Panc1 (cell line): ENCODE measurements at regions of chr12 and their contacts with region 1.

Region 1: GRCh38 chr12:89461649-89462612 is 62.7 kb downstream of the GALNT4 start:
- DNase-seq: peak; percentile 20
- ATAC-seq: peak; percentile 91
- H3K4me3 ChIP-seq: no peak overlapping the region
- H3K27ac ChIP-seq: no peak overlapping the region
- H3K4me1 ChIP-seq: no peaks in the 10 kb centered on the region
- H3K27me3 ChIP-seq: no peaks in the 10 kb centered on the region
- CTCF ChIP-seq: peak; percentile 57; the same call in 1 of the 2 replicates

Region 2: GRCh38 chr12:88970742-88971141 is 491.2 kb before region 1 on chr12:
- CTCF ChIA-PET with region 1: interaction called, 11 read pairs
- POLR2A ChIA-PET with region 1: no interaction called
- in situ Hi-C with region 1: no loop called
- intact Hi-C with region 1: no loop called
- DNase-seq: no peak
- ATAC-seq: no peak
- H3K4me3 ChIP-seq: no peak overlapping the region
- H3K27ac ChIP-seq: no peak overlapping the region
- H3K4me1 ChIP-seq: no peaks in the 10 kb centered on the region
- H3K27me3 ChIP-seq: no peaks in the 10 kb centered on the region
- CTCF ChIP-seq: no peak

Region 3: DNA sequence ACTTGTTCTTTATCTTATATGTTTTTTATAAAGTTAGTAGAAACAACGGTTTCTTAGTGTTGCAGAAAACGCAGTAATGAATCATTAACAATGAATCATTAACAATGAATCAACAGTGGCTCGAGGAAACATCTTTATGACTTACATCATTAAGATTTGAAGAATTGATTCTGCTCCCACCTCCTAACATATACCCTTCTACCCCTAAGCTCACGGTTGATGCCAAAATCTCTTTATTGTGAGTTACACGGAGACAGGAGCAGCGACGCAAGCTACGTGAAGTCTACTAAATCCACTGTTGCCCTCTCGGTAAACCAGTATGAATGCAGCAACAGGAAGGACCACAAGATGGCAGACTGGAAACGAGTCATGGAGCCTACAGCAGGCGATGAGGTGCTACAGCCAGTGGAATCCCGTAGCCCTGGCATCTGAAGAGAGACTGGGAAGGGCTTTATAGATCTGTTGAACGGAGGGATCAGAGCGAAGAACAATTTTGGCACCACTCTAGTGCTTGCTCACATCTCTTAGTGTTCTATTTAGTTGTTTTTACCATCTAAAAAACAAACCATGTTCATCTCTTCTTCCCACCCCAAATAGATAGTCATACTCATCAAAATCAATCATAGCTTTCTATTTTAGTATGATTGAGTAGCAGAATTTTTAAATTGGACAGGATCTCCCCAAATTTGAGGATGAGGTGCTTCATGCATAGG is 442.4 kb before region 1 on chr12:
- CTCF ChIA-PET with region 1: interaction called, 3 read pairs
- POLR2A ChIA-PET with region 1: interaction called, 4 read pairs
- in situ Hi-C with region 1: no loop called
- intact Hi-C with region 1: loop called (anchors 1 kb)
- DNase-seq: peak; percentile 85
- ATAC-seq: peak; percentile 99
- H3K4me3 ChIP-seq: peak overlapping the region; percentile 23 to 45
- H3K27ac ChIP-seq: no peak overlapping the region
- H3K4me1 ChIP-seq: peaks cover 2% of the 10 kb centered on the region; the same call in 1 of the 2 replicates
- H3K27me3 ChIP-seq: peaks cover 5% of the 10 kb centered on the region
- CTCF ChIP-seq: peak; percentile 90

Region 4: GRCh38 chr12:89051065-89051677 is 410.8 kb before region 1 on chr12:
- CTCF ChIA-PET with region 1: no interaction called
- POLR2A ChIA-PET with region 1: no interaction called
- in situ Hi-C with region 1: no loop called
- intact Hi-C with region 1: loop called (anchors 1 kb)
- DNase-seq: peak; percentile 51
- ATAC-seq: peak; percentile 83
- H3K4me3 ChIP-seq: no peak overlapping the region
- H3K27ac ChIP-seq: no peak overlapping the region
- H3K4me1 ChIP-seq: no peaks in the 10 kb centered on the region
- H3K27me3 ChIP-seq: no peaks in the 10 kb centered on the region; the same call in 1 of the 2 replicates
- CTCF ChIP-seq: peak; percentile 77; the same call in 1 of the 2 replicates

Region 5: DNA sequence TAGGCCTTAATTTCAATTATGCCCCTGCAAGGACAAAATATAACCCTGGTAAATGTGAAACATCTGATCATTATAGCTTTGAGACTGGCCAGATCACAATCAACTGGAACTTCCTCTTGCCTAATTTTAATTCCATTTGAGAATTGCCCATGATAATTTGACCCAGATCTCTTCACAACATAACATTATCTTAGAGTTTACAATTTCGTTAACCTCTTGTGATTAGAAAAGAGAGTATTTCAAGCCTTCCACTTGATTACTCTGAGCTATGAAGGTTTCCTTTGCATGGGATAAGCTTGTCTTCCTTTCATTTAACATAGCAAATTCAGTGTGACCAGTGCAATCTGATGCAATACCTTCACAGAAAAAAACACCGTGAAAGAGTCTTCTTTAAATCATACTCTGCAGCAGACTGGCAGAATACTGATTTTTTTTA is 253.3 kb before region 1 on chr12:
- CTCF ChIA-PET with region 1: no interaction called
- POLR2A ChIA-PET with region 1: no interaction called
- in situ Hi-C with region 1: no loop called
- intact Hi-C with region 1: no loop called
- DNase-seq: no peak
- ATAC-seq: no peak
- H3K4me3 ChIP-seq: no peak overlapping the region
- H3K27ac ChIP-seq: no peak overlapping the region
- H3K4me1 ChIP-seq: no peaks in the 10 kb centered on the region
- H3K27me3 ChIP-seq: no peaks in the 10 kb centered on the region
- CTCF ChIP-seq: no peak

Region 6: GRCh38 chr12:89352492-89353187 is 109.3 kb before region 1 on chr12 and contains the start of gene DUSP6:
- CTCF ChIA-PET with region 1: no interaction called
- POLR2A ChIA-PET with region 1: no interaction called
- in situ Hi-C with region 1: no loop called
- intact Hi-C with region 1: loop called (anchors 5 kb)
- DNase-seq: peak; percentile 94
- ATAC-seq: peak; percentile 83
- H3K4me3 ChIP-seq: peak within 1 kb of the TSS; percentile 86 to 88
- H3K27ac ChIP-seq: peak within 1 kb of the TSS; percentile 86
- H3K4me1 ChIP-seq: peaks cover 25% of the 10 kb centered on the region
- H3K27me3 ChIP-seq: no peaks in the 10 kb centered on the region
- CTCF ChIP-seq: no peak
- total RNA-seq, gene DUSP6: 20.3 TPM

Region 7: GRCh38 chr12:89437231-89437630 is 24.7 kb before region 1 on chr12:
- CTCF ChIA-PET with region 1: interaction called, 16 read pairs
- POLR2A ChIA-PET with region 1: no interaction called
- in situ Hi-C with region 1: no loop called
- intact Hi-C with region 1: no loop called
- DNase-seq: no peak
- ATAC-seq: no peak
- H3K4me3 ChIP-seq: no peak overlapping the region
- H3K27ac ChIP-seq: no peak overlapping the region
- H3K4me1 ChIP-seq: no peaks in the 10 kb centered on the region
- H3K27me3 ChIP-seq: no peaks in the 10 kb centered on the region
- CTCF ChIP-seq: no peak